Left cardiac atrium (tissue), 4 donors: ENCODE measurements at regions of chr5 and their contacts with region 1.

Region 1: GRCh38 chr5:14727428-14727865 is 62.9 kb downstream of the OTULIN start:
- DNase-seq: peak; percentile 79
- ATAC-seq: peak; percentile 71 to 83

Region 2: GRCh38 chr5:14830210-14831005 is 103.0 kb after region 1 on chr5:
- intact Hi-C with region 1: no loop called
- DNase-seq: no peak
- ATAC-seq: peak; percentile 34 to 87

Region 3: DNA sequence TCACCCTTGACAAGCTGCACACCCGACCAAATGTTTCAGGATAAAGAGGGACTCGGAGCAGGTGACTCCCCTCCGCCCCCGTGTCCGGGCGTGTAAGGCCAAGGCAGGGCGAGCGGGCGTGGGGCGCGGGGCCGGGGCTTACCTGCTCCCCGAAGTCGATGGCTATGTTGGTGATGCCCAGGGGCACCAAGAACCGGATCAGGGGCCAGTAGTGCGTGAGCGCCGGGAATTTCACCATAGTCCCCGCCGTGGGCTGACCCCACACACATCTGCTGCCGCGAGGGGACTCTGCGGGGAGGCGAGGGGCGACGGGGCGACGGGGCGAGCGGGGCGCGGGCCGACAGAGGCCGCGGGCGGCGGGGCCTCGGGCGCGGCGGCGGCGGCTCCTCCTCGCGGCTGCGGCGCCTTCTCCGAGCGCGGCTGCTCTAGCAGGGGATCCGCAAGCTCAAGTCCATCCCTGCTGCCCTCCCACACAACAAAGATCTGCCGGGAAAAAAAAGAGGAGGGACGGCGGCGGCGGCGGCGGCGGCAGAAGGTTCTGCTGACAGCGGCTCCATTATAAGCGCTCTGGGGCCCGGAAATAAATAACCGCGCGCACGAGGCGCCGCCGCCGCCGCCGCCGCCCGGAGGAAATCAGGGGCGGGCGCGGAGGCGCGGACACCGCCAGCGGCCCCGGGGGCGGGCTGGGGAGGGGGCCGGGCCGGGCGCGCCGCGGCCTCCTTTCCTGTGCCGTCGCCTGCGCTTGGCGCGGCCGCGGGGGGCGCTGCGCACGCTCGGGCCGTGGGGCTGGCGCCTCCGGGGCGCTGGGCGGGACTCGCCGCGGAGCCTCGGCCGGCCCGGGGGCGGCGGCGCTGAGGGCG is 144.0 kb after region 1 on chr5 and contains the start of gene ANKH:
- intact Hi-C with region 1: loop called (anchors 5 to 10 kb)
- DNase-seq: peak; percentile 88
- ATAC-seq: peak; percentile 88 to 94
- total RNA-seq, gene ANKH: 113 to 138 TPM